ENCODE measurements at regions of chr9 and their contacts with region 1.

Region 1: DNA sequence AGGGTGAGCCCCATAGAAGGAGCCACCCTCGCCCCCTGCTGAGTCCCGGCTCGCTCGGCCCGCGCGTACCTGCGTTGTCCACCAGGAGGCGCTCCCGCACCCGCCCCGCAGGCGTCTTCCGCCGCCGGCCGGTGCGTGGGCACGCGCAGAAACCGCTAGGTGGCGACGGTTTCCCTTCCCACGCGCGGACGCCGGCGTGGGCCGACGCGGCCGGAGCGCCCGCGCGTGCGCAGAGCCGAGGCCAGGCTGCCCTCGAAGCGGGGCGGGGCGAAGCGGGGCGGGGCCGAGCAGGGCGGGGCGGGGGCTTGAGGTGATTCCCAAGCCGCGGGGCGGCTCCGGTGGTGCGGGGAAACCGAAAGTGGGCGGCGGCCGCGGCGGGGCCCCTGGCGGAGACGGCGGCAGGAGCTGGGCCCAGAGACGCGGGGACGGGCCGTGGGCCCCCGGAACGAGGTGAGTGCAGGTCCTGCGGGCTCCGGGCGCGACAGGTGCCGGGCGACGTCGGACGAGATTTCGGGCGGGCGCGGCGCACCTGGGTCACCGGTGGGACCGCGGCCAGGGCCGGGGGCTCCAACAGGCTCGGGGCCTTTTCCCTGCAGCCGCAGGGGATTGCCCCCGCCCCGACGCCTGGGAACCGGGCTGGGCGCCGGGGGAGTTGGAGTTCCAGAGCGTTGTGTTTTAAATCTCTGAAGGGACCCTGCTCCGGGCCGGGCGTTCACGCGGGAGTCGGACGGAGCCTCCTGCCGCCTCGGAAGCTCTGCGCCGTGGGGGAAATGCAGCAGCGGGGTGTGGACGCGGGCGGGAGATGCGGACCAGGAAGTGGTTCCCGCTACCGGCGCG is at the start of gene TDRD7:
- DNase-seq: peak; percentile 75
- H3K4me3 Mint-ChIP-seq: peak within 1 kb of the TSS; percentile 75
- H3K27ac Mint-ChIP-seq: peak within 1 kb of the TSS; percentile 81
- H3K4me1 Mint-ChIP-seq: peaks cover 12% of the 10 kb centered on the region
- H3K27me3 Mint-ChIP-seq: peaks cover 27% of the 10 kb centered on the region
- CTCF ChIP-seq: peak; percentile 96
- total RNA-seq, gene TDRD7: 7.1 and 8.2 TPM in 2 replicates

Region 2: GRCh38 chr9:97398999-97399758 is 12.8 kb before region 1 on chr9:
- CTCF ChIA-PET with region 1: interaction called, 10 read pairs
- POLR2A ChIA-PET with region 1: no interaction called
- intact Hi-C with region 1: no loop called
- DNase-seq: peak; percentile 87
- H3K4me3 Mint-ChIP-seq: no peak overlapping the region
- H3K27ac Mint-ChIP-seq: no peak overlapping the region
- H3K4me1 Mint-ChIP-seq: peaks cover 6% of the 10 kb centered on the region
- H3K27me3 Mint-ChIP-seq: no peaks in the 10 kb centered on the region
- CTCF ChIP-seq: peak; percentile 92

Region 3: DNA sequence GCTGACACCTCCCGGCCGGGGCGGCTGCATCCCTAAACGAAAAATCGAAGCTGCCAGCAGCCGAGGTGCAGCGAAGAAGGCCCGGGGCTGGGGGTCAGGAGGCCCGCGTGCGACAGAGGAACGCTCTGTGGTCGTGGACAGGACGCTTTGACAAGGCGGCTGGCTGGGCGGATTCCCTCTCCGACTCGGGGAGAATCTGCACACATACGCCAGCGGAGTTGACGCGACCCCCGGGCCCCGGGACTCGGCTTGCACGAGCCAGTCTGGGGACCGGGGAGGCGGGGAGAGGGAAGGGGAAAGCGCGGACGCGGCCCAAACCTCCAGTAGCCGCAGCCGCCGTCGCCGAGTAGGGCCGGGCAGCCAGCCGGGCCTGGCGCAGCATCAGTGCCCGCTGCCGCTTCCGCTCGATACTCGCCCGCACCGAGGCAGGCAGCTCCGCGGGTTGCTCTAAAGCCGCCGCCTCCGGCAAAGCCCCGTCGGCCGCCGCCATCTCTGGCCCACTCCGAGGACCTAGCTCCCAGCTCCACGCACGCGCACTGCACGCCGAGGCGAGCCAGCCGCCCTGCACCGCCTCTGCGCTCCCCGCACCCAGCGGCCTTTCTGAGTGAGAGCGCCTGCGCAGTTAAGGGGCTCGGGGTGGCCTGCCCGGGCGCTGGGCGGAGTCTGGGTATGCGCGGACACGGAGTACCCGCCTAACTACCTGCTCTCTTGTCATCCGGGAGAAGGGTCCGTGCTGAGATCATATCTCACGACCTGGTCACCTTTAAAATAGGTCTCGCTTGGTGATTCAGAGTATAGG is 285.0 kb after region 1 on chr9 and contains the start of gene XPA:
- CTCF ChIA-PET with region 1: no interaction called
- POLR2A ChIA-PET with region 1: no interaction called
- intact Hi-C with region 1: no loop called
- DNase-seq: peak; percentile 96
- H3K4me3 Mint-ChIP-seq: peak within 1 kb of the TSS; percentile 86
- H3K27ac Mint-ChIP-seq: peak within 1 kb of the TSS; percentile 80
- H3K4me1 Mint-ChIP-seq: peaks cover 38% of the 10 kb centered on the region
- H3K27me3 Mint-ChIP-seq: no peaks in the 10 kb centered on the region
- CTCF ChIP-seq: no peak
- total RNA-seq, gene XPA: 11.8 and 12.3 TPM in 2 replicates